Activated CD4-positive, alpha-beta memory T cell treated with anti-CD3 and anti-CD28 coated beads, Interleukin-2, amount 10 ng/mL, durations not matched to agents 7 days and 5 days (primary cell): ENCODE measurements at regions of chr19 and their contacts with region 1.

Region 1: DNA sequence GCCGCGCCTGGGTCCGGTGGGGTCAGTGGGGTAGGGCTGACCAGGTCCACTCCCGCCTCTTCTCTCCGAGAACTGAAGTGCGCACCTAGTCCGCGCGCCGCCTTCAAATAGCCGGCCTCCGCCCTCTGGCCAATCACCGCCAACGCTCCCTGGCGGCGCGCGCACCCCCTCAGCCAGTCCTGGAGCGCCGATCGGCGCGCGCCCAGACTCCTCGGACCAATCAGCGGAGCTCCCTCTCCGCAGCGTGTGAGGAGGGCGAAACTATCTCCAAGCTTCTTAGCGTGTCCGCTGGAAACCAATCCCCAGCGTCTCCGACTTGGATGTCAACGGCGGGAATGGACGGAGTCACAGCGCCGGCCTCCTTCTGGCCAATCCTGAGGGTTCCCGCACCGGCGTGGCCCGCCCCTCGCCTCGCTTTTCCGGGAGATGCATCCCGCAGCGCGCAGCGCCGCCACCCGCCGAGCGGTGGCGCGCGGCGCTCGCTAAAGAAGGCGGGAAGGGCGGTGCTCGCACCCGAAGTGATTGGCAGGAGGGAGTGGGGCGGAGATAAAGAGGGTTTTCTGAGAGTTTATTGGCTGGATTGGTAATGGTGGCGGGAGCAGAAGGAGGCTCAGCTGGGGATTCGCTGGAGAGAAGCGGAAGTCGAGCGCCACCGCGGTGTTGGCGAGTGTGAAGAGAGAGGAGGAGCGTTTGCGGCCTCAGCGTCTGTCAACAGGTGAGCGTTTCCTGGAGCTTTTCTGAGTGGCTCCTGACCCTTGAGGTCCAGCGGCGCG is at the start of gene ASF1B:
- DNase-seq: peak; percentile 99
- H3K4me3 Mint-ChIP-seq: peak within 1 kb of the TSS; percentile 81
- H3K27ac Mint-ChIP-seq: peak within 1 kb of the TSS; percentile 91
- H3K4me1 Mint-ChIP-seq: peaks cover 39% of the 10 kb centered on the region
- H3K27me3 Mint-ChIP-seq: no peaks in the 10 kb centered on the region
- total RNA-seq, gene ASF1B: 93.5 to 94.8 TPM

Region 2: DNA sequence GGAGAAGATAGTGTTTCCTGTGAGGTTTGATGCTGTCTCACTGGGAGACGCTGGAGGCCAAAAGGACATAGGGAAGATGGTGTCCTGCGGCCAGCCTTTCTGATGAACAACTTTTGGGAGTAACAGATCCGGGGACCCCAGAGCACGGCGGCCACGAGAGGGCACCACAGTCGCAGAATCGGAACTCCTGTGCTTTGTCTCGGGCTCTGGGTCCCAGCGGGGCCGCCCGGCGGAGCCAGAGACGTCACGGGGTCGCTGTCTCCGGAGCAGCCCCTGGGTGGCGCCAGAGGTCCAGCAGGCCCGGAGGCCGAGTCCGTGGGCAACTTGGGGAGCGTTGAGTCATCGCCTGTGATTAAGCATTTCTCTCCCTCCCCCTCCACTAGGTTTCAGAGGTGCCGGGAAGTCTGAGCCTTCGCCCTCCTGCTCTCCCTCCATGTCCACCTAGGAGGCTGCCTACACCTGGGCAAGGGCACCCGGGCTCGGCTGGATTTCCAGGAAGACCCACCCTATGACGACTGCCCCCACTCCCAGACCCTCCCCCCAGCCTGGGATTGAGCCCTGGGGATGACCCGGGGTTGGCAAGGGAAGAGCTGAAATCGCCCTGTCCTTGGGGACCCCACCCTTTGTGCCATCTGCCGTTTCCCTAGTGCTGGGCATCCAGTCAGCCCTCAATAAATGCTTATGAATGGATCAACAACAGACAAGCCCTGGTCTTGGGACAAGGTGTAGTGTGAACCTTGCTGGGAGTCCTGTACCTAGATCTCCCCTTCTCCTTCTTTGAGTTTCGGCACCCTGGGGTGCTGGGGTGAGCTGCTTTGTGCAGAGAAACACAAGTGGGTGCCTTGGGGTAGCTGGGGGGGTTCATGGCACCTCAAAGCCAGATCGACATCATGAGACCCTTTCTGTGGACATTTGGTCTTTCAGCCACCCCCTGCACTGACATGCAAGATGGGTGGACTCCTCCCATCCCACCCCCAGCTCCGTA is 256.3 kb before region 1 on chr19:
- CTCF ChIA-PET with region 1: interaction called, 10 read pairs
- POLR2A ChIA-PET with region 1: interaction called, 6 read pairs
- DNase-seq: peak; percentile 99
- H3K4me3 Mint-ChIP-seq: peak overlapping the region; percentile 19
- H3K27ac Mint-ChIP-seq: peak overlapping the region; percentile 80
- H3K4me1 Mint-ChIP-seq: peaks cover 35% of the 10 kb centered on the region
- H3K27me3 Mint-ChIP-seq: no peaks in the 10 kb centered on the region

Region 3: GRCh38 chr19:14091081-14091812 is 45.4 kb before region 1 on chr19:
- CTCF ChIA-PET with region 1: interaction called, 8 read pairs
- POLR2A ChIA-PET with region 1: interaction called, 15 read pairs
- DNase-seq: peak; percentile 80
- H3K4me3 Mint-ChIP-seq: peak overlapping the region; percentile 99
- H3K27ac Mint-ChIP-seq: peak overlapping the region; percentile 98
- H3K4me1 Mint-ChIP-seq: peaks cover 23% of the 10 kb centered on the region
- H3K27me3 Mint-ChIP-seq: no peaks in the 10 kb centered on the region

Region 4: GRCh38 chr19:14147797-14148605 is 11.3 kb after region 1 on chr19:
- CTCF ChIA-PET with region 1: interaction called, 24 read pairs
- POLR2A ChIA-PET with region 1: interaction called, 60 read pairs
- DNase-seq: peak; percentile 61
- H3K4me3 Mint-ChIP-seq: peak overlapping the region; percentile 84
- H3K27ac Mint-ChIP-seq: peak overlapping the region; percentile 98
- H3K4me1 Mint-ChIP-seq: peaks cover 39% of the 10 kb centered on the region
- H3K27me3 Mint-ChIP-seq: no peaks in the 10 kb centered on the region

Region 5: DNA sequence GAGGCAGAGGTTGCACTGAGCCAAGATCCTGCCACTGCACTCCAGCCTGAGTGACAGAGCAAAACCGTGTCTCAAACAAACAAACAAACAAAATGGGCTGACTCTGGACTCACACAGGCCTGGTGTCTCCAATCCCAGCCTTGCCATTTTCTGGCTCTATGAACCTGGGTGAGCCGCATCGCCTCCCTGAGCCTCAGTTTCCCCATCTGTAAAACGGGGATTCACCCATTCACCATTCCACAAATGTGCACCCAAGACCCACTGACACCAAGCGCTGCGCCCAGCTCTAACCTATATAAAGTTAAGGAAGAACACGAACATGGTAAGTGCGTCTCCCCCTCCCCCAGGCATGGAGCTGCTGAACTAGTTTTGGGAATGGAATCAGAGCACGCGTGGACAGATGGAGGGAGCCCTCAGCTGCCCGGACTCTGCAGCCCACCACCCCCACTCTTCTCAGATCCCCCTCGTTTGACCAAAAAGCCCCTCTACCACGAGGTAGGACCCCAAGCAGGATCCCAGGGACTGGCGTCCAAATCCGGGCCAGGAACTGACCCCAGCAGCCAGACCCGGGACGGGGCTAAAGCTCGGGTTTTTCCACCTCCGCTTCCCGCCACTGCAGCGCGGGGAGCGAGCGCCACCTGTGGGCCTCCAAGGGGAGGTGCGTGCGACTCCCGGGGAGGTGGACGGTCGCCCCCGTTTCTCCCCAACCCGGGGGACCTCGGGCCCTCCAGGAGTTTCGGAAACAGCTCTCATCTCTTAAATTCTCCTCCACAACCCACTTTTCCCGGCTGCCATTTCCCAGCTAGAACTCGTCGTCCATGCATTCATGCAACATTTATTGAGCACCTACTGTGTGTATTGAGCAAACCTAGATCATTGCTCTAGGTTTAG is 211.5 kb after region 1 on chr19:
- CTCF ChIA-PET with region 1: interaction called, 27 read pairs
- POLR2A ChIA-PET with region 1: interaction called, 17 read pairs
- DNase-seq: peak; percentile 74
- H3K4me3 Mint-ChIP-seq: peak overlapping the region; percentile 32
- H3K27ac Mint-ChIP-seq: peak overlapping the region; percentile 24
- H3K4me1 Mint-ChIP-seq: peaks cover 24% of the 10 kb centered on the region
- H3K27me3 Mint-ChIP-seq: no peaks in the 10 kb centered on the region

Region 6: GRCh38 chr19:14405758-14406644 is 269.3 kb after region 1 on chr19:
- CTCF ChIA-PET with region 1: interaction called, 25 read pairs
- POLR2A ChIA-PET with region 1: interaction called, 22 read pairs
- DNase-seq: peak; percentile 92
- H3K4me3 Mint-ChIP-seq: no peak overlapping the region
- H3K27ac Mint-ChIP-seq: peak overlapping the region; percentile 68
- H3K4me1 Mint-ChIP-seq: peaks cover 45% of the 10 kb centered on the region
- H3K27me3 Mint-ChIP-seq: no peaks in the 10 kb centered on the region

Region 7: DNA sequence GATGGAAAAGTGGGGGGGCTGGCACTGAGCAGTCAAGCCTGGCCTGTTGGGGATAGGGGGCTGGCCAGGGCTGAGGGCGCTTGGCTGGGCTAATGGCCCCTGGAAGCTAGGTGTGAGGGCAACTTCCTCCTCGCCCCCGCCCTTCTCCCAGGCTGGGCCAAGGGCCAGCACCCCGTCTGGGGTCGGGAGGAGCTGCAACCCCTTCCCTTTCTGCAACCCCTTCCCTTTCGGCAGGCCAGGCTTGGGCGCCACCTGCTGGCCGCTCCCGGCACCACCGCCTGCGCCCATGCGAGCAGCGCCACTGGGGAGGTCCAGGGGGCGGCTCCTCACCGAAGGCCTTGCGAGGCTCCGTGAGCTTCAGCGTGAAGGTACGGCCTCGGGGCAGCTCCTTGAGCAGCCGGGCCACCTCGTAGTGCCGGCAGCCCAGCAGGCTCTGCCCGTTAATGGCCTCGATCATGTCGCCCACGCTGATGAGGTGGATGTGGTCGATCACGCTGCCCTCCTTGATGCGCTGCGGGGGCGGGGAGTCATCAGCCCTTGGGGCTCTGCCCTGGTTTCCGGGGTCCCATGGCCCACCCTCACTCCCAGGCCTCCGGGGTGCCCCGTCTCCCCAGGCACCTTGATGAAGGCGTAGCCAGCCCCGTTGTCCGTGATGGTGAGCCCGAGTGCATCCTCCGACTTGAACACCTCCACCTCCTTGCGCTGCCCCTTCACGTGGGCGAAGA is 343.4 kb after region 1 on chr19:
- CTCF ChIA-PET with region 1: interaction called, 13 read pairs
- POLR2A ChIA-PET with region 1: interaction called, 6 read pairs
- DNase-seq: peak; percentile 79
- H3K4me3 Mint-ChIP-seq: no peak overlapping the region
- H3K27ac Mint-ChIP-seq: no peak overlapping the region
- H3K4me1 Mint-ChIP-seq: peaks cover 19% of the 10 kb centered on the region
- H3K27me3 Mint-ChIP-seq: no peaks in the 10 kb centered on the region